CD14-positive monocyte (primary cell): ENCODE measurements at regions of chr1 and their contacts with region 1.

Region 1: GRCh38 chr1:184222652-184223052 is 164.2 kb upstream of the C1orf21 start:
- DNase-seq: peak; percentile 27 to 59 (median 46)
- H3K4me3 ChIP-seq: no peak overlapping the region
- H3K4me3 Mint-ChIP-seq: peak overlapping the region; percentile 26 to 65
- H3K27ac ChIP-seq: no peak overlapping the region
- H3K27ac Mint-ChIP-seq: no peak overlapping the region
- H3K4me1 ChIP-seq: no peaks in the 10 kb centered on the region
- H3K4me1 Mint-ChIP-seq: peaks cover 6% of the 10 kb centered on the region
- H3K27me3 ChIP-seq: no peaks in the 10 kb centered on the region
- H3K27me3 Mint-ChIP-seq: peaks cover 0 to 1% (median 0%) of the 10 kb centered on the region in 3 donors
- CTCF ChIP-seq: peak; percentile 97

Region 2: GRCh38 chr1:184520336-184520735 is 297.7 kb after region 1 on chr1:
- intact Hi-C with region 1: no loop called
- DNase-seq: no peak
- H3K4me3 ChIP-seq: no peak overlapping the region
- H3K4me3 Mint-ChIP-seq: no peak overlapping the region
- H3K27ac ChIP-seq: no peak overlapping the region
- H3K27ac Mint-ChIP-seq: no peak overlapping the region
- H3K4me1 ChIP-seq: no peaks in the 10 kb centered on the region
- H3K4me1 Mint-ChIP-seq: no peaks in the 10 kb centered on the region
- H3K27me3 ChIP-seq: no peaks in the 10 kb centered on the region
- H3K27me3 Mint-ChIP-seq: peaks cover 0 to 2% (median 0%) of the 10 kb centered on the region in 3 donors
- CTCF ChIP-seq: no peak

Region 3: DNA sequence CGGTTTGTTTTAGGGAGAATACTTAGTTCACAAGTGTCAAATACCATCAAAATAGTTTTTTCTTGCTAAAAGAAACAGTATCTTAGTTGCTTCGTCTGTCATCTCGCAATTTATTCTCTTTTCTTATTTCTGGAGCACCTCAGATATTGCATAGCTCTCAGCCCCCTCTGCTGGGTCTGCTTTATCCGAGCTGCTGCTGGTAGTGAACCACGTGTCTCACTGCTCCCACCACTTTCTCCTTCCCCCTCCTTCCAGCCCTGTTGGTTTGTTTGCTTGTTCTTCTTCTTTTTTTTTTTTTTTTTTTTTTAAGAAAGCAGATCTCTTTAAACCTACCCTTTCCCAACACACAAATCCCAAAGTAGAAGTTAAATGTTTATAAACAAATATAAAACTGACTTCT is 361.2 kb after region 1 on chr1:
- intact Hi-C with region 1: no loop called
- DNase-seq: no peak
- H3K4me3 ChIP-seq: no peak overlapping the region
- H3K4me3 Mint-ChIP-seq: no peak overlapping the region
- H3K27ac ChIP-seq: no peak overlapping the region
- H3K27ac Mint-ChIP-seq: no peak overlapping the region
- H3K4me1 ChIP-seq: no peaks in the 10 kb centered on the region
- H3K4me1 Mint-ChIP-seq: peaks cover 3% of the 10 kb centered on the region
- H3K27me3 ChIP-seq: no peaks in the 10 kb centered on the region
- H3K27me3 Mint-ChIP-seq: no peaks in the 10 kb centered on the region
- CTCF ChIP-seq: no peak

Region 4: DNA sequence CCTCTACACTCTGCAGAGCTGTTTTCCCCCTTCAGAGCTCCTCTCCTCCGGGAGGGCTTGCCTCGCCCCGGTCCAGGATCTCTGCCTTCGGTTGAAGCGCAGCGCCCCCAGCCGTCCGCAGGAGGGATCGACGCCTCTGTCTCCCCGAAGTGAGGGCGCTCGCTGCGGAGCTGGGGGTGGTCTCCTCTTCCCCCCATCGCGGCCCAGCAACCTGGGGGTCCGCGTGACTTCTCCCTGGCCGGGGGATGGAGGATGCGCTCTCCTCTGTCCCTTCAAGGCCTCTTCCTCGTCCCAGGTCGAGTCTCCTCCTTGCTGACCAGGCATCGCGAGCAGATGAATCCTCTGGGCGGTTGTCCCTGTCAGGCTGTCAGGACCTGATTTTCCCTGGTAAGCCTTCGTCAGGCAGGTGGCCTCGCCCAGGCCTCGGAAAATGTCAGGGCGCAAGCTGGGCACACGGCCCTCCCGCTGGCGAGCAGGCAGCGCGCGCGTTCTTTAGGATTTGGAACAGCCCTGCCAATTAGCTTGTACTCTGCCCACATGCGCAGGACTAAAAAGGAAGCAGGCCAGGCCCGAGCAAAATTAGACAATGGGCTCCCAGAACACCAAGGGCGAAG is 441.5 kb after region 1 on chr1:
- intact Hi-C with region 1: loop called in 1 of 2 experiments (anchors 10 kb)
- DNase-seq: peak; percentile 27 to 56 (median 49)
- H3K4me3 ChIP-seq: peak overlapping the region in 2 of 3 experiments; percentile 7 to 43
- H3K4me3 Mint-ChIP-seq: peak overlapping the region; percentile 73 to 92
- H3K27ac ChIP-seq: no peak overlapping the region
- H3K27ac Mint-ChIP-seq: peak overlapping the region in 2 of 7 donors; percentile 40 to 66
- H3K4me1 ChIP-seq: peaks cover 9% of the 10 kb centered on the region in 2 donors
- H3K4me1 Mint-ChIP-seq: peaks cover 11% of the 10 kb centered on the region
- H3K27me3 ChIP-seq: no peaks in the 10 kb centered on the region
- H3K27me3 Mint-ChIP-seq: peaks cover 0 to 7% (median 3%) of the 10 kb centered on the region in 3 donors
- CTCF ChIP-seq: peak; percentile 98